Activated B cell treated with CpG ODN at 0.5 μM for 24 hours (primary cell): ENCODE measurements at regions of chr7 and their contacts with region 1.

Region 1: GRCh38 chr7:50092579-50093491 is at the start of gene ZPBP:
- DNase-seq: peak; percentile 40
- ATAC-seq: peak; percentile 79
- H3K4me3 Mint-ChIP-seq: peak within 1 kb of the TSS; percentile 88
- H3K27ac Mint-ChIP-seq: peak within 1 kb of the TSS; percentile 81
- H3K4me1 Mint-ChIP-seq: peaks cover 8% of the 10 kb centered on the region
- H3K27me3 Mint-ChIP-seq: peaks cover 2% of the 10 kb centered on the region
- CTCF ChIP-seq: peak; percentile 61
- total RNA-seq, gene ZPBP: not detected in 2 replicates

Region 2: DNA sequence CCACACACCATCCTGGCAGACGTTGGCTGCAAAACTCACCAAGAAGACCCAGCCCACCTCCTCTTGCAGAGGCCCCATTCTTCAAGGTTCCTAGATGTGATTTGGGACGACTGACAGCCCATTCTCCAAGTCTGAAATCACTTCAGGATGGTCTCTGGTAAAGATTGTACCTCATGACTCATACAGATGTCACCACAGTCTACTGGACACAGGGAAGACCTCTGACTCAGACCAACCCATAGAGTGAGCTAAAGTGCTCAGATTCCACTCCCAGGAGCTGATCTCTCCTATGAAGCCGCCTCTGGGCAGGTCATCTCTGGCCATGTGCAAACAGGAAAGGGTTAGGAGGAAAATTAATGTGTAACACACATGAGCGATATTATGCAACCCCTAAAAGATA is 421.8 kb before region 1 on chr7:
- CTCF ChIA-PET with region 1: no interaction called
- POLR2A ChIA-PET with region 1: no interaction called
- intact Hi-C with region 1: no loop called
- DNase-seq: no peak
- ATAC-seq: no peak
- H3K4me3 Mint-ChIP-seq: no peak overlapping the region
- H3K27ac Mint-ChIP-seq: no peak overlapping the region
- H3K4me1 Mint-ChIP-seq: no peaks in the 10 kb centered on the region
- H3K27me3 Mint-ChIP-seq: no peaks in the 10 kb centered on the region
- CTCF ChIP-seq: no peak

Region 3: GRCh38 chr7:50068961-50069551 is 23.8 kb before region 1 on chr7:
- CTCF ChIA-PET with region 1: interaction called, 21 read pairs
- POLR2A ChIA-PET with region 1: interaction called, 4 read pairs
- intact Hi-C with region 1: loop called (anchors 1 kb)
- DNase-seq: no peak
- ATAC-seq: peak; percentile 62
- H3K4me3 Mint-ChIP-seq: peak overlapping the region; percentile 81
- H3K27ac Mint-ChIP-seq: peak overlapping the region; percentile 91
- H3K4me1 Mint-ChIP-seq: peaks cover 21% of the 10 kb centered on the region
- H3K27me3 Mint-ChIP-seq: peaks cover 5% of the 10 kb centered on the region
- CTCF ChIP-seq: no peak

Region 4: DNA sequence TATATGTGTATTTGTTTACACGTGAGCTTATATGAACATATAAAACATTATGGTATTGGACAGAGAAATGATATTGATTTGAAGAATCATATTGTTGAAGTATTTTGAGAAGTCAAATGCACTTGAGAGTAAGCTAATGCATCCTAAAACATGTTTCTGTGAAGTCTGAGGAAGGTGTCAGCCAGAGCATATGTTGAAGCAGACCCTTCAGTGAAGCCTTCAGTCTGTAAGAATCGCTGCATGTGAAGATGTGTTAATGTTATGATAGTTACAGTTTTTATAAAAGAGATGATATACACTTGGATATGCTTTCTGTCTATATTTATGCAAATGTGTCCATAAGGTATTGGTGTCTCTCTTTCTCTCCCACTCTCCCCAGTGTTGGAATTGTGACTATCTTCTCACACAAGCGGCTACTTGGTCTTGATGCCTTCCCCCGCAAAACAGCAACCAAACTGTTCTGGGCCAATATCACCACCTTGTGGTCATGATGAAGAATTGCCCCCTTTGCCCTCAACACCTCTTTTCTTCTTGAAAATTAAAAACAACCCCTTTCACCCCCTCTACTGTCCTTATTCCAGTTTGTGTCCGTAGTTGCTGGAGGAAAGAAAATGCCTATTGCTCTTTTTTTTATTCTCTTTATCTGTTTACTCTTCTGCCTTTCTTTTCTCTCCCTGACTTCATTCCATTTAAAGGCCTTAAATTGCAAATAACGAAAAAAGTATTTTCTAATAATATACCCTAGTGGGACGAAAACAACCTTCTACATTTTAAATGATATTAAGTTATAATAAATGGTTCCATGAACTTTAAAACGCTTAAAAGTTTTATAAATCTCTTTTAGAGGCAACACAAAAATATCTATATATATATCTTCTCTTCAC is 276.6 kb after region 1 on chr7:
- CTCF ChIA-PET with region 1: interaction called, 13 read pairs
- POLR2A ChIA-PET with region 1: no interaction called
- intact Hi-C with region 1: loop called (anchors 1 kb)
- DNase-seq: no peak
- ATAC-seq: peak; percentile 66
- H3K4me3 Mint-ChIP-seq: no peak overlapping the region
- H3K27ac Mint-ChIP-seq: peak overlapping the region; percentile 74
- H3K4me1 Mint-ChIP-seq: peaks cover 94% of the 10 kb centered on the region
- H3K27me3 Mint-ChIP-seq: no peaks in the 10 kb centered on the region
- CTCF ChIP-seq: peak; percentile 50

Region 5: GRCh38 chr7:50679218-50680007 is 586.6 kb after region 1 on chr7:
- CTCF ChIA-PET with region 1: interaction called, 36 read pairs
- POLR2A ChIA-PET with region 1: no interaction called
- intact Hi-C with region 1: loop called (anchors 1 kb)
- DNase-seq: no peak
- ATAC-seq: peak; percentile 42
- H3K4me3 Mint-ChIP-seq: no peak overlapping the region
- H3K27ac Mint-ChIP-seq: no peak overlapping the region
- H3K4me1 Mint-ChIP-seq: peaks cover 6% of the 10 kb centered on the region
- H3K27me3 Mint-ChIP-seq: peaks cover 5% of the 10 kb centered on the region
- CTCF ChIP-seq: no peak

Region 6: GRCh38 chr7:51162724-51163329 is 1070.0 kb after region 1 on chr7:
- CTCF ChIA-PET with region 1: interaction called, 120 read pairs
- POLR2A ChIA-PET with region 1: interaction called, 9 read pairs
- intact Hi-C with region 1: loop called (anchors 1 kb)
- DNase-seq: peak; percentile 18
- ATAC-seq: peak; percentile 77
- H3K4me3 Mint-ChIP-seq: no peak overlapping the region
- H3K27ac Mint-ChIP-seq: no peak overlapping the region
- H3K4me1 Mint-ChIP-seq: peaks cover 7% of the 10 kb centered on the region
- H3K27me3 Mint-ChIP-seq: peaks cover 10% of the 10 kb centered on the region
- CTCF ChIP-seq: peak; percentile 20